Endothelial cell of umbilical vein (primary cell): ENCODE measurements at regions of chr9 and their contacts with region 1.

Region 1: GRCh38 chr9:120936011-120936763 is 9.6 kb upstream of the TRAF1 start:
- DNase-seq: peak; percentile 95
- H3K4me3 ChIP-seq: no peak overlapping the region
- H3K27ac ChIP-seq: peak overlapping the region; percentile 72
- H3K4me1 ChIP-seq: peaks cover 58% of the 10 kb centered on the region
- H3K27me3 ChIP-seq: no peaks in the 10 kb centered on the region
- CTCF ChIP-seq: peak; percentile 89 to 90
- POLR2A ChIP-seq: no peak

Region 2: GRCh38 chr9:120619751-120620655 is 316.2 kb before region 1 on chr9:
- CTCF ChIA-PET with region 1: interaction called, 6 read pairs
- POLR2A ChIA-PET with region 1: no interaction called
- dilution Hi-C with region 1: no loop called
- intact Hi-C with region 1: loop called (anchors 1 kb)
- DNase-seq: peak; percentile 81
- H3K4me3 ChIP-seq: no peak overlapping the region
- H3K27ac ChIP-seq: no peak overlapping the region
- H3K4me1 ChIP-seq: no peaks in the 10 kb centered on the region
- H3K27me3 ChIP-seq: no peaks in the 10 kb centered on the region
- CTCF ChIP-seq: peak; percentile 67 to 68
- POLR2A ChIP-seq: no peak

Region 3: DNA sequence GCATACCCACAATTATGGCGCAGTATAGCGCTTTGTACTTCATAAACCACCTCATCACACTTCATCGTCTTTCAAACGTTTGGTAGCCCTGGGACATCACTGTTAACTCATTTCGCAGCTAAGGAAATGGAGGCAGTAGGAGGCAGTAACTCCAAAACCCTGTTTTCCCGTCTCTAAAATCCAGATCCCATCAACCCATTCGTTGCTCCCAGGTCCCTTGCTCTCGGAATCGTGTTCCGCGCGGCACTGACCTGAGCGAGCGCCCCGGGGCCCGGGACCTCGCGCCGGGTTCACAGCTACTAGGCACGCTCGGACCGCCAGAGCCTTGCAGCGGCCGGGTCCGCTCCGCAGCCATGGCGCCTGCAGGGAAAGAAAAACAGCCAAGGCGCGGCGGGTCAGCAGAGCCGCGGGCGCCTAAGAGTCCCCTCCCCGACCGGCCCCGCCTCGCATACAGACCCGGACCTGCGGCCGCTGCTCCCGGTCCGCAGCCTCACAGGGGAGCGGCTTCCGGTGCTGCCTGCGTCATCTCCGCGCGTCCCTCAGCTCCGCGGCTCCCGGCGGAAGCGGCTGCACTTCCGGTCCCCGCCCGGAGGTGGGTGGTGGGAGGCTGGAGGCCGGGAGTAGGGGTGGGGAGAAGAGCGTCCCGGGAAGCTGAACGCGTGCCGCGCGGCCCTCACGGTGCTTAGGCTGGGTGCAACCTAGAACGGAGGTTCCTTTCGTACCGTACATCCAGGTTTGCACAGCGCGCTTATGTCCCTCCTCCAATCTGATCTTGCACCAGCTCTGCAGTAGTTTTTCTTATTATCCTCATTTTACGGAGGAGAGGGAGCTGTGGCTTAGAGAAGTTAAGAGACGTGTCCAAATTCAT is 143.1 kb before region 1 on chr9 and contains the start of gene FBXW2:
- CTCF ChIA-PET with region 1: interaction called, 5 read pairs
- POLR2A ChIA-PET with region 1: no interaction called
- dilution Hi-C with region 1: no loop called
- intact Hi-C with region 1: loop called (anchors 1 kb)
- DNase-seq: peak; percentile 92
- H3K4me3 ChIP-seq: peak within 1 kb of the TSS; percentile 78 to 83 (median 82)
- H3K27ac ChIP-seq: peak within 1 kb of the TSS; percentile 64
- H3K4me1 ChIP-seq: peaks cover 27% of the 10 kb centered on the region
- H3K27me3 ChIP-seq: no peaks in the 10 kb centered on the region
- CTCF ChIP-seq: no peak
- POLR2A ChIP-seq: peak; percentile 95
- total RNA-seq, gene FBXW2: 70.2 and 72.3 TPM in 2 replicates

Region 4: GRCh38 chr9:120868676-120869359 is 67.4 kb before region 1 on chr9:
- CTCF ChIA-PET with region 1: interaction called, 38 read pairs
- POLR2A ChIA-PET with region 1: no interaction called
- dilution Hi-C with region 1: no loop called
- intact Hi-C with region 1: loop called (anchors 1 kb)
- DNase-seq: peak; percentile 86
- H3K4me3 ChIP-seq: peak overlapping the region in 2 of 3 experiments; percentile 19 to 58
- H3K27ac ChIP-seq: no peak overlapping the region
- H3K4me1 ChIP-seq: peaks cover 13% of the 10 kb centered on the region
- H3K27me3 ChIP-seq: no peaks in the 10 kb centered on the region
- CTCF ChIP-seq: peak; percentile 27 to 41
- POLR2A ChIP-seq: no peak

Region 5: DNA sequence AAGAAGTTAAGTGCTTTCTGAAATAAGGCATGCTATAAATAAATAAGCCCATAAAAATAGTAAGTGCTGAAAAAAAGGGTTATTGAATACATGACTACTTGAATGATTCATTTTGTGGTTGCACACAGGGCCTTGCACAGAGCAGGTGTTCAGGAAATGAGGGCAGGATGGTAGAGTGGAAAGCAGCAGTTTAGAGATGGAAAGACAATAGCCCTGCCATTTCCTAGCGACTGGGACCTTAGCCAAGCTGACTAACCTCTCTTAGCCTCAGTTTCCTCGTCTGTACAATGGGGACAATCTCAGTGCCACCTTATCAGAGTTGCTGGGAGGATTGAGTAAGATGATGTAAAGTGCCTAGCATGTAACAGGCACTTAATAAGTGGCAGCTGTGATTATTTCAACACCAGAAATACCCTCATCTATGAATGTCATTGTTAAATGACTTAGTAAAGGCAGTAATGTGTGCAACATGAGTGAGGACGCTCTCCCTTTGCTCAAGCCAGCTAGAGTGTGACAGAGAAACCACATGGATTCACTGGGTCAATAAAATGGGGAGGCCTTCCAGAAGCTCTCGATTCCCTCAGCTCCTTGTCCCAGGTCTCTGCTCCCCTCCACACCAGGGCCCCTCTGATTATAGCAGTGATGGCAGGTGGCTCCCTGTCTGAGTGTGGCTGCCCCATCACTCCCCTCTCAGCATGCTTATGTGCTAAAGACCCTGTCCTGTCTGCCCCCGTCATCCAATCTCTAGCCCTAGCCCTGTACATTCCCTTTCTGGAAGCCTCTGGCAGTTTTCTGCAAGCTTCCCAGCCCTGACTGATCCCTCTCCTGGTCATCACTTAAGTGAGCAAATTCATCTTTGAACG is 43.2 kb before region 1 on chr9:
- CTCF ChIA-PET with region 1: interaction called, 14 read pairs
- POLR2A ChIA-PET with region 1: no interaction called
- dilution Hi-C with region 1: no loop called
- intact Hi-C with region 1: loop called (anchors 1 kb)
- DNase-seq: peak; percentile 96
- H3K4me3 ChIP-seq: no peak overlapping the region
- H3K27ac ChIP-seq: peak overlapping the region; percentile 54
- H3K4me1 ChIP-seq: peaks cover 25% of the 10 kb centered on the region
- H3K27me3 ChIP-seq: no peaks in the 10 kb centered on the region
- CTCF ChIP-seq: no peak
- POLR2A ChIP-seq: no peak

Region 6: GRCh38 chr9:120974921-120975320 is 38.7 kb after region 1 on chr9:
- CTCF ChIA-PET with region 1: no interaction called
- POLR2A ChIA-PET with region 1: no interaction called
- dilution Hi-C with region 1: no loop called
- intact Hi-C with region 1: no loop called
- DNase-seq: no peak
- H3K4me3 ChIP-seq: no peak overlapping the region
- H3K27ac ChIP-seq: no peak overlapping the region
- H3K4me1 ChIP-seq: no peaks in the 10 kb centered on the region
- H3K27me3 ChIP-seq: no peaks in the 10 kb centered on the region
- CTCF ChIP-seq: no peak
- POLR2A ChIP-seq: no peak